Activated CD4-positive, alpha-beta T cell treated with anti-CD3 and anti-CD28 coated beads, Interleukin-2, amount 10 ng/mL, durations not matched to agents 7 days and 5 days (primary cell): ENCODE measurements at regions of chr20 and their contacts with region 1.

Region 1: DNA sequence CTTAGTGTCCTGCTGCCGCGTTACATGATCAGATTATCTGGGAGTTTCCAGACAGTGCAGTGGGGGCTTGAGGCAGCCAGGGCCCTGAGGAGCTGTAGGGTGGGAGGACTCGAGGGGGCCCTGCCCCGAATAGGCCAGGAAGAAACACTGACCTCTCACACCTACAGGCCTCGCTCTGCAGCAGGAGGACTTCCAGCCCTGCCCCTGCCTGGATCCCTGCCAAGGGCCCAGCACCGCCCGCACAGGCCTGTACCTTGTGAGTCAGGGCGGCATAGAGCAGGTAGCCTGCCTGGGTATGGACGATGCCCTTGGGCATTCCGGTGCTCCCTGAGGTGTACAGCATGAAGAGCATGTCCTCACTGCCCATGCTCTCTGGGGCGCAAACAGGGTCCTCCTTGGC is 30.1 kb upstream of the APMAP start:
- DNase-seq: no peak
- H3K4me3 Mint-ChIP-seq: no peak overlapping the region
- H3K27ac Mint-ChIP-seq: no peak overlapping the region
- H3K4me1 Mint-ChIP-seq: no peaks in the 10 kb centered on the region
- H3K27me3 Mint-ChIP-seq: no peaks in the 10 kb centered on the region

Region 2: DNA sequence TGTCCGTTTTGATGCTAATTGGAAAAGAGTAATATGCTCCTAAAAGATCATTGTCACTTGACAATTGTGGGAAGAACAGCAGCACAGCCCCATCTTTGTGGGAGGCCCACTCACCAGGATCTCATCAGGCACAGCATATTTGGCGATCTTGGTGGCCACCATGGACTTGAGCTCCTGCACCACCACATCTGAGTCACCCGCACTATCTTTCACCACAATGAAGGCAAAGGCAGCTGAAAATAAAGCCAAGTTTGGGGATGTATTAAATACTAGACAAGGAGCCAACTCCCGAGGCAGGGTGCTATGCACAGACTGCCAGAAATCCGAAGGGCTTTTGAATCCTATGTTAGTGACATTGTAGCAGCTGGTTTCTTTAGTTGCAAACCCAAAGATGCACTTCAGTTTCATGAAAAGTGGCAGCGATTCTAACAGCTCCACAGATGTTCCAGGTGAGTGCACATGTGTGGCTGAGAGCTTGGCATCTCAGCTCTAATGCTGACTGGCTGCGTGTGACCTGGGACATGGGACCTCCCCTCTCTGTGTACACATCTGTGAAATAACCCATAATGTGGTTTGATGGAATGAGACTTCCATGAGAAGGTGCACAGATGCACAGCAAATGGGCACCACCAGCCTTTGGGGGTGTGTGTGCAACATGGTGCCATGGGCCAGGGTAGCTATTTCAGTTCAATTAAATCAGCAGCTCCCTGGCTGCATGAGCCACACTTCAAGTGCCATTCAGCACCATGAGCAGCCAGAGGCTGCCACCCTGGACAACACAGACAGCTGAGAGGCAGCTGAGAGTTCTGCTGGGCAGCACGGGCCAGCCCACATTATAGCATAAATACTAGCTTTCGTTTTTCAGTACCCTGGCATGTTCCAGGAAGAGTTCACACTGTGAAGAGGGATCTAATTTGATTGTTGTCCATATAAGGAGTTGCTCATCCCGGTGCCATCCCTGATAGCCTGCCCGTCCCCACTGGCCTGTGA is 13.2 kb before region 1 on chr20:
- CTCF ChIA-PET with region 1: interaction called, 16 read pairs
- POLR2A ChIA-PET with region 1: no interaction called
- DNase-seq: no peak
- H3K4me3 Mint-ChIP-seq: no peak overlapping the region
- H3K27ac Mint-ChIP-seq: no peak overlapping the region
- H3K4me1 Mint-ChIP-seq: no peaks in the 10 kb centered on the region
- H3K27me3 Mint-ChIP-seq: no peaks in the 10 kb centered on the region

Region 3: DNA sequence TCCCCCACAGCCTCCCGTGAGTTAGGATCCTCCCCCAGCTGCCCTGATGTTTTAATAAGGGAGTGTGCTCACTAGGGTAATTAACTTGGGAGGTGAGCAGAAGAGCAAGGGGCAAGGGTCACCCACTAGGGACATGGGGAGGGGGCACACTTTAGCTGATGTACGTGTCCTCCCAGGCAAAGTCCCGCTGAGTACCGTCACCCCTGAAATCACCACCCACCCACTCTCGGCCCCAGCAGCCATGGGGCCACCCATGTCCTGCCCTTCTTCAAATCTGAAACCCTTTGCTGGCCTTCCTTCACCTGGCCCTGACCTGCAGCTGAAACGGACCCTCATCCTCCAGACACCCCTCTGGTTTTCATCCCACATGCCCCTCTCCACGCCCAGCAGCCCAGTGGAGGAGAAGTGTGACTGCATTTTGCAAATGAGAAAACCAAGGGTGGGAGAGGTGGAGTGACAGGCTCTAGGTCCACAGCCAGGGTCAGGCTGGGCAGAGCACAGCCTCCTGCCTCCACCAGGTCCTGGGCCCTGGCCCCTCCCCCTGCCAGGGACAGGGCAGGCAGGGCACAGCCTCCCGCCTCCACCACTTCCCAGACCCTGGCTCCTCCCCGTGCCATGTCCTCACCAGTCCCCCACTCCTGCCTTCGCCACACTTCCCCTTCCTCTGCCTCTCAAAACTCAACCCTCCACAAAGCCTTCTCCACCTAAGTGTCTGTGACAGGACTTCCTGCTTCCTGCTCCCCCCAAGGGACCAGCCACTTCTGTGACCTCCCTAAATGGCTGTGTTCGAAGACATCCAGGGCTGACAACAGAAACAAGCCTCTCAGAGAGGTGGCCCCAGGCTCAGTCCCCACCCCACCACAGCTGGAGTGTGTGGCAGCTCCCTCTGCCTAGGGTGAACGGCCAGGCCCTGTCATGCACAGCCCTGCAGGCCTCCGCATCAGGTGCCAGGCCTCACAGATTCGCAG is 20.1 kb after region 1 on chr20:
- CTCF ChIA-PET with region 1: no interaction called
- POLR2A ChIA-PET with region 1: no interaction called
- DNase-seq: peak; percentile 75
- H3K4me3 Mint-ChIP-seq: peak overlapping the region; percentile 54
- H3K27ac Mint-ChIP-seq: peak overlapping the region; percentile 98
- H3K4me1 Mint-ChIP-seq: peaks cover 39% of the 10 kb centered on the region
- H3K27me3 Mint-ChIP-seq: no peaks in the 10 kb centered on the region

Region 4: GRCh38 chr20:25076731-25077609 is 54.3 kb after region 1 on chr20:
- CTCF ChIA-PET with region 1: no interaction called
- POLR2A ChIA-PET with region 1: no interaction called
- DNase-seq: peak; percentile 17
- H3K4me3 Mint-ChIP-seq: no peak overlapping the region
- H3K27ac Mint-ChIP-seq: no peak overlapping the region
- H3K4me1 Mint-ChIP-seq: peaks cover 5% of the 10 kb centered on the region
- H3K27me3 Mint-ChIP-seq: peaks cover 81% of the 10 kb centered on the region